Activated CD4-positive, alpha-beta memory T cell treated with anti-CD3 and anti-CD28 coated beads, Interleukin-2, amount 10 ng/mL, durations not matched to agents 7 days and 5 days (primary cell): ENCODE measurements at regions of chr6 and their contacts with region 1.

Region 1: DNA sequence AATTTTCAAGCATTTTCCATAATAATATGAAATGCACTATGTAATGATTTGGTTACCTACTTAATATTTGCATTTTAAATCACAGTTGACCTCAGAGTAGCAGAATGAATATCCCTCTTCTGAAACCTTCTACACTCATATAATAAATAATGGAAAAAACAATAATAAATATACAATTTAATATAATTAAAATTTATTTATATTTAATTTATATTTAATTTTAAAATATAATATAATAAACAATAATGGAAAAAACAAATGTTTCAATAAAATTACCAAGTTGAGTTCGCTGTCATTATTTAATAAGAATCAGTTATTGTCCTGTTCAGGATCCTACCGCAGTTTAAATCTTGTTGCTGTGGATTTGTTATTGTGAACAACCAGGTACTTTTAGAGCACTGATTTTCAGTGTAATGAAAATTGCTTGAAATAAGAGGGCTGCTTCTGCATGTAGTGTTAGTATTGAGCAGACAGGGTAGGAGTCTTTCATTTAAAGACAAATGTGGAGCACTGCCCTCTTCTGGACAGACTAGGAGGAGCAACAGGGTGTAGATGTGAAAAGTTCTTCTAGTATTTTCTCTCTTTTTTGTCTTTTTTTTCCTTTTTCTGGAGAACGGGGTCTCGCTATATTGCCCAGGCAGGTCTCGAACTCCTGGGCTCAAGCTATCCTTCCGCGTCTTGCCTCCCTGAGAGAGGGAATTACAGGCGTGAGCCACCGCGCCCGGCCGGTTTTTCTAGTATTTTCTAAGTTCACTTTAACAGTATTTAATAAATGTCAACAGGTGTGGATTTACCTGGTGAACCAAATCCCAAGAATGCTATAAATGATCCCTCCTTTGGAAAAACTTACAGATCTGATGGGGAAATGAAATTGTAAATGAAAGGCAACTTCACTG is 13.6 kb downstream of the TRAPPC3L start:
- DNase-seq: peak; percentile 63
- H3K4me3 Mint-ChIP-seq: no peak overlapping the region
- H3K27ac Mint-ChIP-seq: no peak overlapping the region
- H3K4me1 Mint-ChIP-seq: no peaks in the 10 kb centered on the region
- H3K27me3 Mint-ChIP-seq: peaks cover 28% of the 10 kb centered on the region

Region 2: DNA sequence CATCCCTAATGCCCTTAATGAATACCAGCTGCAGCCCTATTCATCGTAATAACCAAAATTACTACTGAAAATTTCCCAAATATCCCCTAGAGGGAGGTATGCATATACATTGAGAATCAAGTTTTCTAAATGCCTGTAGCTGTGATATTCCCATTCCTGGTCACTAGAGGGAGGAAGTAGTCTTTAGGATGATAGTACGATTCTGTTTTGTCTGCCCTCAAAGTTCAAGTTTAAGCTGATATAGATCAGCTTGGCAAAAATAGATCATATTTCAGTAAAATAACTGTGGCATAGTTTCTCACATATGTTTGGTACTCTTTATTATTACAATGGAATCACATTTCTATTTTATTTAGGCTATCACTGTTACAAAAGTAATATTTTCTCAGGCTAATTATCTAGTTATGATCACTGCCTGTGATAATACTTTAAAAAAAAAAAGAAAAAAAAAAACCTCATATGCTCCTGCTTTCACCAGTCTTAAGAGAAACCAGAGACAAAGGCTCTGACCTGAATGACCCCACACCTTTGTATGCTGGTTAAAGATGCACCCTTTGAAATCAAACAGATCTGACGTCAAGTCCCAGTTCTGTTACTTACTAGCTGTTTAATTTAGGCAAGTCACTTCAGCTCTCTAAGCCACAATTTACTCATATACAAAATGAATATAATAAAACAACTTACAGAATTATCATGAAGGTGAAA is 263.2 kb before region 1 on chr6:
- CTCF ChIA-PET with region 1: interaction called, 11 read pairs
- POLR2A ChIA-PET with region 1: no interaction called
- DNase-seq: no peak
- H3K4me3 Mint-ChIP-seq: no peak overlapping the region
- H3K27ac Mint-ChIP-seq: no peak overlapping the region
- H3K4me1 Mint-ChIP-seq: peaks cover 7% of the 10 kb centered on the region
- H3K27me3 Mint-ChIP-seq: no peaks in the 10 kb centered on the region

Region 3: GRCh38 chr6:116287689-116288282 is 244.1 kb before region 1 on chr6:
- CTCF ChIA-PET with region 1: interaction called, 60 read pairs
- POLR2A ChIA-PET with region 1: no interaction called
- DNase-seq: no peak
- H3K4me3 Mint-ChIP-seq: no peak overlapping the region
- H3K27ac Mint-ChIP-seq: no peak overlapping the region
- H3K4me1 Mint-ChIP-seq: no peaks in the 10 kb centered on the region
- H3K27me3 Mint-ChIP-seq: no peaks in the 10 kb centered on the region

Region 4: GRCh38 chr6:116542426-116542825 is 10.5 kb after region 1 on chr6:
- CTCF ChIA-PET with region 1: interaction called, 10 read pairs
- POLR2A ChIA-PET with region 1: no interaction called
- DNase-seq: no peak
- H3K4me3 Mint-ChIP-seq: no peak overlapping the region
- H3K27ac Mint-ChIP-seq: no peak overlapping the region
- H3K4me1 Mint-ChIP-seq: no peaks in the 10 kb centered on the region
- H3K27me3 Mint-ChIP-seq: peaks cover 40% of the 10 kb centered on the region

Region 5: DNA sequence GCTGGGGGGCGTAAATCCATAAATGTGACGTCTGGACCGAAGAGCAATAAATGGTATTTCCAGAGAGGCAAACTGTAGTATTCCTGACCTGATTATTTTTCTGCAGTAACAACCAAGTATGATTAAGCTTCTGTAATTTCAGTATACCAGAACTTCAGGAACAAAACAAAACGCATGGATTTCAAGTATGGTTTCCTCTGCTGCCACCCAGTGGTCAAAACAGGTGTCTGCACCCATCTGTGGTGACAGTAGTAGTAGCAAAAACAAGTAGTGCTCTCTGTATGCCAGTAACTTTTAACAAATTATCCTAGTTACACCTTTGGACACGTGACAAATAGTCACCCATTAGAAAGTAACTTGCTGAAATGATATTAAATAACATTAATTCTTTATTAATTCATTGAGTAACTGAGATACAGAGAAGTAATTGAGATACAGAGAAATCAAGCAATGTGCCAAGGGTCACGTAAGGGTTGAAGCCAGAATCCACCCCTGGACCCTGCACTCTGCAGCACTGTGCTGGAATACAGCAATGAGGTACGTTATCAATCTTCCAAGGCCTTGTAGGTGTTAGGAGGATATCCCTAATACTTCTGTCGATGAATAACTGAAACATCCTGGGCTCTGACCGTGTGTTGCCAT is 29.6 kb after region 1 on chr6:
- CTCF ChIA-PET with region 1: interaction called, 11 read pairs
- POLR2A ChIA-PET with region 1: no interaction called
- DNase-seq: peak; percentile 73
- H3K4me3 Mint-ChIP-seq: no peak overlapping the region
- H3K27ac Mint-ChIP-seq: no peak overlapping the region
- H3K4me1 Mint-ChIP-seq: peaks cover 4% of the 10 kb centered on the region
- H3K27me3 Mint-ChIP-seq: peaks cover 16% of the 10 kb centered on the region